ENCODE measurements at regions of chr4 and their contacts with region 1.

Region 1: DNA sequence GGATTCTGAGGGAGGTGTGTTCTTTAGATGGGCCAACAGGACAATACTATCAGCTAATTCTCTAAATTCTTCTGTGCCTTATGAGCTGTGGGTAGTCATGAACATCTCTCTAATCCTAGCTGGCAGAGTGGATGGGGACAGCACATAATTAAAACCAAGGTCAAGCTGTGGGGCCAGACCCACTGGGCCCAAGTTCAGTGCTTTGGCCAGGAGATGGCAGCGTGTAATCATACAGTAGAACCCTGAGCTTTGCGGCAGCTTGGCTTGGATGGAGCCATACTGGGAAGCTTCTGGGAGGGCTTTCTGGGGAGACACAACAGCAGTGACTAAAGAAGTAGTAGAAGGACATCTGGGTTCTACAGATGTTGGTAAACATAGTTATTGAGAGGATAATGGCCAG is 140.3 kb upstream of the CXCL13 start:
- DNase-seq: no peak
- H3K4me3 Mint-ChIP-seq: no peak overlapping the region
- H3K27ac Mint-ChIP-seq: no peak overlapping the region
- H3K4me1 Mint-ChIP-seq: peaks cover 8% of the 10 kb centered on the region
- H3K27me3 Mint-ChIP-seq: peaks cover 16% of the 10 kb centered on the region

Region 2: DNA sequence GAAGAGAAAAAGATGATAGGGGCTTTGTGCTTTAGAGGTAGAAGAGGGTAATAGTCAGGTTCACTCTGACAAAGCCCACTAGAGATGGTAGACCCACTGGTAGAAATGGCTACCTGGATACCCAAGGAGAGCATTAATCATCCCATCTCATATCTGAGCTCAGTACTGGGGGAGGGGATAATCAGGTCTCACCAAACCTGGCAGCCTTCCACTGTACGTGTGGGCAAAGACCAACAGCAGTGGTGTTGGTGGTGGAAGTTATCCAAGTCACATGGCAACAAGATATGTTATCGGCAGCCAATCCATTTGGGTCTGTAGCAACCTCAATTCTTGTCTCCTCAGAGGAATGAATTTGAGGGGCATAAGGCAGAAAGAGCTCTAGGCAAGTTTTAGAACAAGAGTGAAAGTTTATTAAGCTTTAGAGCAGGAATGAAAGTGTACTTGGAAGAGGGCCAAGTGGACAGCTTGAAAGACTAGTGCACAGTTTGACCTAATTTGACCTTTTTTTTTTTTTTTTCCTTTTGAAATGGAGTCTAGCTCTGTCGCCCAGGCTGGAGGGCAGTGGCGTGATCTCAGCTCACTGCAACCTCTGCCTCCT is 73.4 kb after region 1 on chr4:
- intact Hi-C with region 1: loop called (anchors 5 kb)
- DNase-seq: no peak
- H3K4me3 Mint-ChIP-seq: no peak overlapping the region
- H3K27ac Mint-ChIP-seq: no peak overlapping the region
- H3K4me1 Mint-ChIP-seq: peaks cover 28% of the 10 kb centered on the region
- H3K27me3 Mint-ChIP-seq: peaks cover 14% of the 10 kb centered on the region

Region 3: GRCh38 chr4:77618383-77619122 is 153.3 kb after region 1 on chr4:
- intact Hi-C with region 1: loop called (anchors 1 kb)
- DNase-seq: peak; percentile 30
- H3K4me3 Mint-ChIP-seq: no peak overlapping the region
- H3K27ac Mint-ChIP-seq: no peak overlapping the region
- H3K4me1 Mint-ChIP-seq: peaks cover 26% of the 10 kb centered on the region
- H3K27me3 Mint-ChIP-seq: peaks cover 28% of the 10 kb centered on the region